HEK293T (cell line): ENCODE measurements at regions of chr5 and their contacts with region 1.

Region 1: GRCh38 chr5:149367249-149367971 is 9.6 kb downstream of the PCYOX1L start:
- DNase-seq: peak; percentile 80

Region 2: GRCh38 chr5:149317281-149318048 is 49.9 kb before region 1 on chr5:
- CTCF ChIA-PET with region 1: interaction called, 11 read pairs
- POLR2A ChIA-PET with region 1: no interaction called
- DNase-seq: peak; percentile 52

Region 3: DNA sequence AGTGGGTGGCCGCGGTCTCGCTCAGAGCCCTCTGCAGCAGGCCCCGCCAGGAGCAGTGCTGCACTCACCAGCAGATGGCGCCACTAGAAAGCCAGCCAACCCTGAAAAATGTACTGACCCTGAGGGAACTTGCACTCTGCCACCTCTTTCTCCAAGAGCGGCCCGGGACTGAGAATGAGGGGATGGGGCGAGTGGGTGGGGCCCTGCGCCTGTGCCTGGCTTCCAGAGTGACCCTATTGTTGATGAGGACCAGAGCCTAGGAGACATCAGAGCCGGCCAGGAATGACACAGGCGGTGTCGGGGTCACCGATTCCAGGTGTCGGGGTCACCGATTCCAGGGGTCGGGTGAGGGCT is 14.6 kb after region 1 on chr5:
- CTCF ChIA-PET with region 1: interaction called, 20 read pairs
- POLR2A ChIA-PET with region 1: no interaction called
- DNase-seq: peak; percentile 87

Region 4: DNA sequence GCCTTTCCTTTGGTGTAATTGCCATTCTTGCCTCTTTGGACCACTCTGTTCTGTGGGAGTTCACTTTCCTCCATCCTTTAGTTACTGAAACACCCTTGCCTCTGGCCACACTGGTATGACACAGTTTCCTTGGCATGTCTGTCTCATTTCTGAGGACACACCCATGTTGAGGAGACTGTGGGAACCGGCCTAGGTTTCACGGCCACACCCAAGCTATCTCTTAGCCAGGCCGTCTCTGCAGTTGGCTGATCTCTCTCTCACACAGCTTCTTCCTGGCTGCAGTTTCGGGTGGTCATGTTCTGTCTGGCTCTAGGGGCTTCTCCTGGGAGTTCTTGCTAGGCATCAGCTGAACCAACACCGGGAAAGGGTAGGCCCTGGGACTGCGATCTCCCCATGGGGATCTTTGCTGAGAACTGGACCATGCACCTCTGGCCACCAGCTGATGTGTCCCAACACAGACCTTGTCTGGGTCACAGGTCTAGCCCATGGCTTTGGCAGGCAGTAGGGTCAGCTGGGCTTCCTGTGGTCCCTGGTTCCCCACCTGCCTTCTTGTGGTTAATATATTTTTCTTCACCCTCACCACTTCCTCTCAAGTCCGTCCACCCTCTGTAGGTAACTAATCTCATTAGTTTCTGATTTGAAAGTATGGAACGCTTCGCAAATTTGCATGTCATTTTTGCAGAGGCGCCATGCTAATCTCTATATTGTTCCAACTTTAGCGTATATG is 238.8 kb after region 1 on chr5:
- CTCF ChIA-PET with region 1: no interaction called
- POLR2A ChIA-PET with region 1: no interaction called
- DNase-seq: no peak